Vagina (tissue), 2 donors: ENCODE measurements at regions of chr9 and their contacts with region 1.

Region 1: DNA sequence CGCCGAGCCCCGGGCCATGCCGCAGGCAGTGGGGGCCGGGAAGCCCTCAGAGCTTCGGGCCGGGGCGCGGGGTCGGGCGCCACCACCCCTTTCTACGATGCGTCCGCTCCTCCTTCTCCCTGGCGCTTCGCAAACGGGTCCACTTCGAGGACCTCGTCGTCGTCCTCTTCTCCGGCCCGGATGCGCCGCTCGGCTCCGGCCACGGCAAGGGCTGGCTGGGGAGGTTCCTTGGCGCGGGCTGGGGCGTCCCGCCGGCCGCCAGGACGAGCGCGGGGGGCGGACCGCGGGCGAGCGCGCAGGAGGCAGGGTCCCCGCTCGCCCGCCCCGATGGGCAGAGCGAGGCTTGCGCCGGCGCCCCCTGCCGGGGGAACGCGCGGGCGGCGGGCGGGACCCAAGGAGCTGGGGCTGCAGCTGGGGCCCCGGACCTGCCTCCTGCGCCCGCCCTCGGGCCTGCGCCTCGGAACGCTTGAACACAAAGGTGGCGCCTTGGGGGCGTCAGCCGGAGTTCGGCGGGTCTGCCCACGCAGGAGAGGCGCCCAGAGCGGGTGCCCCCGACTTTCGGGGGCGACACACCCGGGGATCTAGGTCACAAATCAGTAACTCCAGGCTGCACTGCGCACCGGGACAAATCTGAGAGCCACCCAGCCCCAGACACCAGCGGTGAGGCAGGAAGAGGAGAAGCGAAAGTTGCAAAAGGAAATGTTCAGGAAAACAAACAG is at the start of gene ROR2:
- DNase-seq: peak in 1 of 2 donors; percentile 88
- H3K4me3 ChIP-seq: peak within 1 kb of the TSS; percentile 63 to 85
- H3K27ac ChIP-seq: peak within 1 kb of the TSS; percentile 87
- H3K4me1 ChIP-seq: peaks cover 60% of the 10 kb centered on the region
- H3K27me3 ChIP-seq: no peaks in the 10 kb centered on the region
- CTCF ChIP-seq: peak; percentile 20 to 56 (median 28)
- POLR2A ChIP-seq: peak in 1 of 2 donors; percentile 45
- total RNA-seq, gene ROR2: 22.3 TPM

Region 2: GRCh38 chr9:91775011-91775707 is 174.9 kb before region 1 on chr9:
- intact Hi-C with region 1: loop called (anchors 5 kb)
- DNase-seq: peak in 1 of 2 donors; percentile 85
- H3K4me3 ChIP-seq: no peak overlapping the region
- H3K27ac ChIP-seq: no peak overlapping the region
- H3K4me1 ChIP-seq: peaks cover 46% of the 10 kb centered on the region
- H3K27me3 ChIP-seq: no peaks in the 10 kb centered on the region
- CTCF ChIP-seq: peak in 2 of 3 experiments; percentile 53 to 61
- POLR2A ChIP-seq: no peak

Region 3: DNA sequence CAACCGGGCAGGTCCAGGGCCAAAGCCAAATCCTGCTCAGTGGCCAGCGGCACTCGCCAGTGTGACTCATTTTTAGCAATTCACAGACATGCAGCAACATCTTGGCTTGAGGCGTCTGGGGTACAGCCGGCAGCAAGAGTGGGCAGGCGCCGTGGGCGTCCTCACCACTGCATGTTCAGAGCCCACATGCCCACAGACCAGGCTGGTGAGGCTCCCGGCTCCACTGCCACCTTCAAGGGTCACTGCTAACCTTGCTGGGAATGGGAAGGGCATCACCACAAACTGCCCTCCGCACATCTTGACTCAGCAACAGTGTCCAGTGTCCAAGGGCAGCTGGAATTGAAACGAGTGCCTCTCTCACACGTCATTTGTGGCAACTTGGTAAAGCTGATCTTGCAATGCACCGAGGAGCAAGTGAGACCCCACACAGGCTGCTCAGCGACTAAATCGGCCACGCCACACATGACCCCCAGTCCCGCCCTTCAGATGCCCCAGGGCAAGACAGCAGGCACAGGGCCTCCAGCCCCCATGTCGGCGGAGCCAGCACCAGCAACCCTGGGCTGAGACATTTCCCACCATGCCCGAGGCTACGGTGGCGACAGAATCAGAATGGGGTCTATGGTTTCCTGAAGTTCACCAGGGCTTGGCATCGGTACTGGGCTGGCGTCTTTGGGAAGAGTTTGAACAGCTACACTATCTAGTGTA is 140.4 kb before region 1 on chr9:
- intact Hi-C with region 1: no loop called
- DNase-seq: peak in 1 of 2 donors; percentile 77
- H3K4me3 ChIP-seq: no peak overlapping the region
- H3K27ac ChIP-seq: no peak overlapping the region
- H3K4me1 ChIP-seq: peaks cover 20% of the 10 kb centered on the region
- H3K27me3 ChIP-seq: no peaks in the 10 kb centered on the region
- CTCF ChIP-seq: no peak
- POLR2A ChIP-seq: no peak

Region 4: GRCh38 chr9:91824601-91825305 is 125.4 kb before region 1 on chr9:
- intact Hi-C with region 1: loop called (anchors 5 kb)
- DNase-seq: peak in 1 of 2 donors; percentile 94
- H3K4me3 ChIP-seq: peak overlapping the region; percentile 3 to 15
- H3K27ac ChIP-seq: peak overlapping the region; percentile 31
- H3K4me1 ChIP-seq: peaks cover 29% of the 10 kb centered on the region
- H3K27me3 ChIP-seq: no peaks in the 10 kb centered on the region
- CTCF ChIP-seq: no peak
- POLR2A ChIP-seq: no peak

Region 5: DNA sequence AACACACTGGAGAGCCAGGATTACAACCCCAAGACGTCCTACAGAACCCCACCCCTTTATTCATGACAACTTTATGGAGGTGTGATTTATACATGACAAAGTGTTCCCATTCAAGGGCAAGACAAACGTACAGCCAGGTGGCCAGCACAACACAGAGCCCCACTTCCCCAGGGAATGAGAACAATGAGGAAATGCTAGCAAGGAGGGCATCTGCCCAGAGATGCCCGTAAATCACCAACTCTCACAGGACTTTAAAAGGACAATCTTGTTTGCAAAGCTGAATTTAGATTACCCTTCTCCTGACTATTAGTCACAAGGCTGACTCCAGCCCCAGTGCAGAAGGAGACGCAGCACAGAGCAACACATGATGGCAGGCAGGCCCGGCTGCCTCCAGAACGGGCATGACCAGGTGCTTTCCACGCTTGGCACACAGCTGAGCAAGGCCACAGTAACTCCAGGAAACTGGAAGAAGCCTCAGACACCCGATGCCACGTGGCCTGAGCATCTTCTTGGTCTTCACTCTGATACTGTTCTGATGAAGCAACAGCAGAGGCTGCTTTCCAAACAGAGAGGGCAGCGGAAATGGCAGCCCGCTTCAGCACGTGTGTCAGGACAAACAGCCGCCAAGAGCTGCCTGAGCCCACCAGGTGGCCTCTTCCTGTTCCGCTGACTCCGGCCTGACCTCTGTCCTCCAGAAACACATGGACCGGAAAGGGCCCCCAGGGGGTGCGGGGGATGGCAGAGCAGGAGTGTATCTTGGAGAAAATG is 51.5 kb before region 1 on chr9:
- intact Hi-C with region 1: loop called (anchors 10 kb)
- DNase-seq: no peak
- H3K4me3 ChIP-seq: no peak overlapping the region
- H3K27ac ChIP-seq: peak overlapping the region; percentile 17
- H3K4me1 ChIP-seq: peaks cover 90% of the 10 kb centered on the region
- H3K27me3 ChIP-seq: no peaks in the 10 kb centered on the region
- CTCF ChIP-seq: no peak
- POLR2A ChIP-seq: no peak